Activated B cell treated with CpG ODN at 0.5 μM for 24 hours (primary cell): ENCODE measurements at regions of chr12 and their contacts with region 1.

Region 1: DNA sequence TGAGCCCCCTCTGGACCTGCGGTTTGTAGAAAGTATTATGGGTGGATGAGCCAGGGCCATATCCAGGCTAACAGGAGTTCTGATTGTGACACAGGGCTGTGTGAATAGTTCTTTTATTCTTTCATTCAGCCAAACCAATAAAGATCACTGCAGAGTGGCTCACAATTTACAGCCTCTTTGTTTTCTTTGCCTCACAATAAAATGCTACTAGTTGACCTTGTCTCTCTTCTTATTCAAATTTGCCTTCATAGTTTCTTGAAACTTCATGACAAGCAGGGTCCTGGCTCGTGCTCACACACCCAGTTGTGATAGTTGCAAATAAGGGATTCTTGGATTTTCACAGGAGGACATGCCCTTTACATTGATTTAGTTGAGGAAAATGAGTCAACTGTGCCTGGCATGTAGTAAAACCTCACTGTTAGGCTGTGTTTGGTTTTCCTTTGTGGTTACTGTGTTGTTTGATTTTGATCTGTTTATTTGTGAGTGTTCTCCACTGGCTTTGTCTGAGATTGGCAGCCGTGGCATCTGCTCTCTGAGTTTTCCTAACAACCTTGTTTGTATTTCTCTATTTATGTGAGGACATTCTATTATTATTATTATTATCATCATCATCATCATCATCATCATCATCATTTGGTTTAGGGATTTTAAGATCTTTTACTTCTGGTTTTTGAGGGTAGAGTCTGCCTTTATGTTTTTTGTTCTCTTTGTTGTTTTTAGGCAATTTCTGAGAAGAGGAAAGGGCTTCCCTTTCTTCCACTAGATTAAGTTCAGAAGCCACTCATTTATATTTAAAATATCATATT is 2.7 kb upstream of the KRT6B start:
- DNase-seq: no peak
- ATAC-seq: no peak
- H3K4me3 Mint-ChIP-seq: no peak overlapping the region
- H3K27ac Mint-ChIP-seq: no peak overlapping the region
- H3K4me1 Mint-ChIP-seq: no peaks in the 10 kb centered on the region
- H3K27me3 Mint-ChIP-seq: peaks cover 13% of the 10 kb centered on the region
- CTCF ChIP-seq: no peak

Region 2: GRCh38 chr12:51941011-51941581 is 513.5 kb before region 1 on chr12:
- CTCF ChIA-PET with region 1: no interaction called
- POLR2A ChIA-PET with region 1: no interaction called
- intact Hi-C with region 1: no loop called
- DNase-seq: no peak
- ATAC-seq: no peak
- H3K4me3 Mint-ChIP-seq: no peak overlapping the region
- H3K27ac Mint-ChIP-seq: no peak overlapping the region
- H3K4me1 Mint-ChIP-seq: no peaks in the 10 kb centered on the region
- H3K27me3 Mint-ChIP-seq: peaks cover 35% of the 10 kb centered on the region
- CTCF ChIP-seq: no peak

Region 3: DNA sequence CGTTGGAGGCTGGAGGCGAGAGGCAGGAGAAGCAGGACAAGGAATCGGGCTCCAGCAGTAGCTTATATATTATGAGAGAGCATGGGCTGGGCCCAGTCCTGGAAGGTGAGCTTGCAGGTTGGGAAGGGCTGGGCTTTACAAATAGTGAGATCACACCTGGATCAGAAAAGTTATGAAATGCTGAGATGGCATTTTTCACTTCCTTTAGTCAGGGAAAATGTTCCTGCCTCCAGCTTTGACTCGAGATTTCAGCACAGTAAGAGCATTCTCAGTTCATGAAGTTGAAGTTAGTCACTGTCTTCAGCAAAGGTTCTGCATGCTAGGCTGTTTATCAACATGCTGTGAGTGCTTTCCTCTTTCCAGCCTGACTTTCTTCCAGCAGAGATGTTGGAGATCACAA is 19.2 kb after region 1 on chr12 and contains the start of gene KRT6C:
- CTCF ChIA-PET with region 1: no interaction called
- POLR2A ChIA-PET with region 1: no interaction called
- intact Hi-C with region 1: loop called (anchors 1 kb)
- DNase-seq: no peak
- ATAC-seq: no peak
- H3K4me3 Mint-ChIP-seq: no peak within 1 kb of the TSS
- H3K27ac Mint-ChIP-seq: no peak within 1 kb of the TSS
- H3K4me1 Mint-ChIP-seq: no peaks in the 10 kb centered on the region
- H3K27me3 Mint-ChIP-seq: peaks cover 11% of the 10 kb centered on the region
- CTCF ChIP-seq: no peak
- total RNA-seq, gene KRT6C: not detected in 2 replicates